ENCODE measurements at regions of chr19 and their contacts with region 1.

Region 1: GRCh38 chr19:39328046-39328705 is 7.5 kb upstream of the LRFN1 start:
- DNase-seq: peak; percentile 89
- ATAC-seq: peak; percentile 87 to 89
- H3K4me3 ChIP-seq: no peak overlapping the region
- H3K27ac ChIP-seq: no peak overlapping the region
- H3K4me1 ChIP-seq: peaks cover 10% of the 10 kb centered on the region
- H3K27me3 ChIP-seq: no peaks in the 10 kb centered on the region
- CTCF ChIP-seq: peak; percentile 94

Region 2: GRCh38 chr19:39125554-39126311 is 202.4 kb before region 1 on chr19 and contains the start of gene PAK4:
- intact Hi-C with region 1: loop called (anchors 10 kb)
- DNase-seq: peak; percentile 98
- ATAC-seq: peak; percentile 98
- H3K4me3 ChIP-seq: peak within 1 kb of the TSS; percentile 92
- H3K27ac ChIP-seq: peak within 1 kb of the TSS; percentile 76
- H3K4me1 ChIP-seq: peaks cover 64% of the 10 kb centered on the region
- H3K27me3 ChIP-seq: no peaks in the 10 kb centered on the region
- CTCF ChIP-seq: no peak
- total RNA-seq, gene PAK4: 73.0 TPM

Region 3: DNA sequence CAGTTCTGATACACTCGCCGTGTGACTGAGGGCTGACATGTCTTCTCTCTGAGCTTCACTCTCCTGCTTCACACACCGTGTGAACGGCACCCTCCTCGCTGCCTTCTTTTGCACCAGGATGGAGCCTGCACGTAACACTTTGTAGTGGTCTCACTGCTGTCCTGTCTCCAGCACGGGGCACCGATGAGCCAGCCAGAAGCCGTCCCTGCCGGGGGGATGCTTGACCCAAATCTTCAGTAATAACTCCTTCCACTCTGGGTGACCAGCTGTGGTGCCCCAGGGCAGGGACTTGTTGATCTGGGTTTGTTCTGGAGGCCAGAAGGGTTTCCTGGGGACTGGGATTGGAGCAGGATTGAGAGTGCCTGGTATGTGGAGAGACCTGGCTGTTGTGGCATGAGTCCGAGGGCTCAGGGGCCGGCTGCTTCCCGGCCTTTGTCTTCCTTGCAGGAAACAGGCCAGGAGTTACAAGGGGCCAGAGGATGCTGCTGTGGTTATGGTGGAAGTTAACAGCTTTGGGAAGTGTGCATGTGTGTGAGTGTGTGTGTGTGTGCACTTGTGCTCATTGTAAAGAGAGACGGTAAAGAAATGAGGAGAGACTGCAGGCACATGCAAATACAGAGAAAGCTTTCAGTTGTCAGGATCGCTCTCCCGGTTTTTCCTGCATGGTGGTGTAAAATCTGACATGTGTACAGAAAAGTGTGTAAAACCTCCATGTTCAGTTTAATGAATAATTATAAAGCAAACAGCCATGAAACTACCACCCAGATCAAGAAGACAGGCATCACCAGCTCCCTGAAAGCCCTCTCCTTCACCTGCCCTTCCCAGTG is 183.7 kb before region 1 on chr19:
- intact Hi-C with region 1: no loop called
- DNase-seq: no peak
- ATAC-seq: peak; percentile 71 to 75
- H3K4me3 ChIP-seq: peak overlapping the region; percentile 27
- H3K27ac ChIP-seq: peak overlapping the region; percentile 73
- H3K4me1 ChIP-seq: peaks cover 59% of the 10 kb centered on the region
- H3K27me3 ChIP-seq: no peaks in the 10 kb centered on the region
- CTCF ChIP-seq: no peak

Measured in lower lobe of right lung (tissue), 2 donors.